CD4-positive, alpha-beta T cell (primary cell): ENCODE measurements at regions of chr2 and their contacts with region 1.

Region 1: DNA sequence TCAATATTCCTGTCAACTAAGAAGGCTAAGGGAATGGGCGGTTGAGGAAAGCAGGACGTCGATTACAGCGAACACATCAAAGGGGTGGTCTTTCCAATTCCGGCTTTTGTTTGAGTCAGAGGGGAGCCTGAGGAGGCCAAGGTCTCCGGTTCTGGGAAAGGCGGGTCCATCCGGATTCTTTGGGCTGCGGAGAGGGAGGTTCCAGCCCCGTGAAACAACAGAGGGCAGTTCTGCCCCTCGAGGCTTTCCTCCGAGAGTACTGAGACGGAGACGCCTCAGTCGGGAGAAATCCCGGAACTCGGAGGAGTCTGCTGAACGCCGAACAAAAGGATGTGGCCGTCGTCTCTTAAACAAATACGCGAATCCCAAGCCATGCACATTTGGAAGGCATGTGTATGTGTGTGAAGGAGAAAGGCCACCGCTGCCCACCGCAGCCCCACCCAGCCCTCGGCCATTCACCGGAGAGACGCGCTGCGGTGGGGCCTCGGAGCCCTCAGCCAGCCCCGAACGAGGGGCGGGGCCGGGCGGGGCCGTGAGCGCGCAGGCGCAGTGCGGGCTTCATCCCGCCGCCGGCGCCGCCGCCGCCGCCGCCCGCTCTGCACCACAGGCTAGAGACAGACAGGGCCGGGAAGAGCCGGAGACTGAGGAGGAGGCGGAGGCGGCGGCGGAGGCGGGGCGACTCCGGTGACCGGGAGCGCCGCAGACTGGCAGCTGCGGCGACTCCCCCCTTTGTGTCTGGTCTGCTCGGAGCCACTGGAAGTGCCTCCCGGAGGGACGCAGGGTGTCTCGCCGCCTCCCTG is at the start of gene BMPR2:
- DNase-seq: peak; percentile 65 to 92 (median 80)
- ATAC-seq: peak; percentile 72
- H3K4me3 ChIP-seq: peak within 1 kb of the TSS; percentile 79
- H3K4me3 Mint-ChIP-seq: peak within 1 kb of the TSS; percentile 100
- H3K27ac ChIP-seq: peak within 1 kb of the TSS; percentile 21 to 37
- H3K27ac Mint-ChIP-seq: peak within 1 kb of the TSS; percentile 87
- H3K4me1 ChIP-seq: peaks cover 20% of the 10 kb centered on the region
- H3K4me1 Mint-ChIP-seq: peaks cover 31% of the 10 kb centered on the region
- H3K27me3 ChIP-seq: no peaks in the 10 kb centered on the region
- H3K27me3 Mint-ChIP-seq: no peaks in the 10 kb centered on the region
- CTCF ChIP-seq: no peak
- total RNA-seq, gene BMPR2: 12.7 to 12.8 TPM

Region 2: GRCh38 chr2:201432038-201432620 is 943.7 kb before region 1 on chr2:
- CTCF ChIA-PET with region 1: no interaction called
- POLR2A ChIA-PET with region 1: no interaction called
- intact Hi-C with region 1: loop called in 1 of 2 experiments (anchors 10 kb)
- DNase-seq: peak in 3 of 14 experiments; percentile 55 to 75 (median 59)
- ATAC-seq: peak; percentile 95
- H3K4me3 ChIP-seq: no peak overlapping the region
- H3K4me3 Mint-ChIP-seq: peak overlapping the region; percentile 59
- H3K27ac ChIP-seq: peak overlapping the region; percentile 13 to 57
- H3K27ac Mint-ChIP-seq: peak overlapping the region; percentile 88
- H3K4me1 ChIP-seq: peaks cover 25% of the 10 kb centered on the region
- H3K4me1 Mint-ChIP-seq: peaks cover 71% of the 10 kb centered on the region
- H3K27me3 ChIP-seq: no peaks in the 10 kb centered on the region
- H3K27me3 Mint-ChIP-seq: no peaks in the 10 kb centered on the region
- CTCF ChIP-seq: no peak

Region 3: GRCh38 chr2:202033321-202034248 is 342.2 kb before region 1 on chr2 and contains the start of gene FZD7:
- CTCF ChIA-PET with region 1: no interaction called
- POLR2A ChIA-PET with region 1: no interaction called
- intact Hi-C with region 1: loop called in 1 of 2 experiments (anchors 10 kb)
- DNase-seq: peak; percentile 69 to 91 (median 82)
- ATAC-seq: peak; percentile 78
- H3K4me3 ChIP-seq: peak within 1 kb of the TSS; percentile 95
- H3K4me3 Mint-ChIP-seq: peak within 1 kb of the TSS; percentile 94
- H3K27ac ChIP-seq: no peak within 1 kb of the TSS
- H3K27ac Mint-ChIP-seq: peak within 1 kb of the TSS; percentile 45
- H3K4me1 ChIP-seq: peaks cover 31% of the 10 kb centered on the region
- H3K4me1 Mint-ChIP-seq: peaks cover 12% of the 10 kb centered on the region
- H3K27me3 ChIP-seq: peaks cover 17 to 30% of the 10 kb centered on the region in 2 experiments
- H3K27me3 Mint-ChIP-seq: peaks cover 9% of the 10 kb centered on the region
- CTCF ChIP-seq: no peak
- total RNA-seq, gene FZD7: 0.17 to 0.25 TPM

Region 4: DNA sequence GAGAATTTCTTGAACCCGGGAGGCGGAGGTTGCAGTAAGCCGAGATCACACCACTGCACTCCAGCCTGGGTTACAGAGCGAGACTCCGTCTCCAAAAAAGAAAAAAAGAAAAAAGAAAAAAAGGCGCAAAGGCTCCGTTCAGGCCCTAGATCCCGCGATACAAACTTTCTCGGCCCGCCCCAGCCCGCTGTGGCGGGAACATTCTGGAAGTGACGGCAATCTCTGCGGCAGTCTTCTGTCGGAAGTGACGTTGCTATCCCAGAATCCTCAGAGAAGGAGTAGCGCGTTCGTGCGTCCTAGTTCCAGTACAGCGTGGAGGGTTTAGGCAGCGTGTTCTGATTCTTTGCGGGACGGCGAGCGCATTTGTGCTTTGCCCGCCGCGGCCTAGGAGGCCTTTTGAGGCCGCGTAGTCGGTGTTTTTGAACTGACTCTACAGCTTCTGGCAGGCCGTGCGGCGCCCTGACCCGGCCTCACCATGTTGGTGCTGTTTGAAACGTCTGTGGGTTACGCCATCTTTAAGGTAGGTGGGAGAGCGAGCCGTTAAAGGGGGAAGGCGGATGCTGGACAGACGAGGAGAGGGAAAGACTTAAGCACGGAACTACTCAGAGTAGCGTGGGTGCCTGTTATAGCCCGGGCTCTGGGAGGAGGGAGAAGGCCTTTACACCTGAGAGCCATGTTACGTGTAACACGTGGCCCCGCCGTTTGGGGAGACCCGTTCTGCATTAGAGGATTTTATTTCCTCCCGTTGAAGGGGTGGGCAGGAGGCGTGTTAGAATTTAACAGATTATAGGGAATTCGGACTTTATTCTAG is 110.1 kb before region 1 on chr2 and contains the start of gene NOP58:
- CTCF ChIA-PET with region 1: no interaction called
- POLR2A ChIA-PET with region 1: interaction called, 5 read pairs
- intact Hi-C with region 1: loop called in 1 of 2 experiments (anchors 5 kb)
- DNase-seq: peak; percentile 75 to 97 (median 84)
- ATAC-seq: peak; percentile 80
- H3K4me3 ChIP-seq: peak within 1 kb of the TSS; percentile 97
- H3K4me3 Mint-ChIP-seq: peak within 1 kb of the TSS; percentile 80
- H3K27ac ChIP-seq: peak within 1 kb of the TSS; percentile 97 to 99
- H3K27ac Mint-ChIP-seq: no peak within 1 kb of the TSS
- H3K4me1 ChIP-seq: peaks cover 29% of the 10 kb centered on the region
- H3K4me1 Mint-ChIP-seq: peaks cover 21% of the 10 kb centered on the region
- H3K27me3 ChIP-seq: no peaks in the 10 kb centered on the region
- H3K27me3 Mint-ChIP-seq: no peaks in the 10 kb centered on the region
- CTCF ChIP-seq: no peak
- total RNA-seq, gene NOP58: 280 to 288 TPM

Region 5: DNA sequence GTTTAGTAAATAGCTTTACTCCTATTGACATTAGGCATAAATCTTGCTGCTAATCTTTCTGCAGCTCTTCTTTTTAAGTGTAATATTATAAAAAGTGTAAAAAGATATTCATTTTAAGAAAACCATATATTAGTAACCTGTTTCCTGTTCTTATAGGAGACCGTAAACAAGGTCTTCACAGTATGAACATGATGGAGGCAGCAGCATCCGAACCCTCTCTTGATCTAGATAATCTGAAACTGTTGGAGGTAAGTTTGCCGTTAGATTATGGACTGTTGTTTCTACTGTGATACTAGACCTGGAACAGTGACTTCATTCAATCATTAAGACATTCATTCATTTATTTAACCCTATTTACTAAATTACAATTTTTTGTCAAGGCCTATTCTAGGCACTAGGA is 138.9 kb after region 1 on chr2:
- CTCF ChIA-PET with region 1: no interaction called
- POLR2A ChIA-PET with region 1: no interaction called
- intact Hi-C with region 1: no loop called
- DNase-seq: no peak
- ATAC-seq: no peak
- H3K4me3 ChIP-seq: no peak overlapping the region
- H3K4me3 Mint-ChIP-seq: no peak overlapping the region
- H3K27ac ChIP-seq: no peak overlapping the region
- H3K27ac Mint-ChIP-seq: no peak overlapping the region
- H3K4me1 ChIP-seq: no peaks in the 10 kb centered on the region
- H3K4me1 Mint-ChIP-seq: no peaks in the 10 kb centered on the region
- H3K27me3 ChIP-seq: no peaks in the 10 kb centered on the region
- H3K27me3 Mint-ChIP-seq: no peaks in the 10 kb centered on the region
- CTCF ChIP-seq: no peak

Region 6: GRCh38 chr2:202765436-202765835 is 389.6 kb after region 1 on chr2:
- CTCF ChIA-PET with region 1: no interaction called
- POLR2A ChIA-PET with region 1: no interaction called
- intact Hi-C with region 1: no loop called
- DNase-seq: no peak
- ATAC-seq: no peak
- H3K4me3 ChIP-seq: no peak overlapping the region
- H3K4me3 Mint-ChIP-seq: no peak overlapping the region
- H3K27ac ChIP-seq: no peak overlapping the region
- H3K27ac Mint-ChIP-seq: peak overlapping the region; percentile 84
- H3K4me1 ChIP-seq: peaks cover 4% of the 10 kb centered on the region
- H3K4me1 Mint-ChIP-seq: peaks cover 63% of the 10 kb centered on the region
- H3K27me3 ChIP-seq: no peaks in the 10 kb centered on the region
- H3K27me3 Mint-ChIP-seq: no peaks in the 10 kb centered on the region
- CTCF ChIP-seq: no peak

Region 7: DNA sequence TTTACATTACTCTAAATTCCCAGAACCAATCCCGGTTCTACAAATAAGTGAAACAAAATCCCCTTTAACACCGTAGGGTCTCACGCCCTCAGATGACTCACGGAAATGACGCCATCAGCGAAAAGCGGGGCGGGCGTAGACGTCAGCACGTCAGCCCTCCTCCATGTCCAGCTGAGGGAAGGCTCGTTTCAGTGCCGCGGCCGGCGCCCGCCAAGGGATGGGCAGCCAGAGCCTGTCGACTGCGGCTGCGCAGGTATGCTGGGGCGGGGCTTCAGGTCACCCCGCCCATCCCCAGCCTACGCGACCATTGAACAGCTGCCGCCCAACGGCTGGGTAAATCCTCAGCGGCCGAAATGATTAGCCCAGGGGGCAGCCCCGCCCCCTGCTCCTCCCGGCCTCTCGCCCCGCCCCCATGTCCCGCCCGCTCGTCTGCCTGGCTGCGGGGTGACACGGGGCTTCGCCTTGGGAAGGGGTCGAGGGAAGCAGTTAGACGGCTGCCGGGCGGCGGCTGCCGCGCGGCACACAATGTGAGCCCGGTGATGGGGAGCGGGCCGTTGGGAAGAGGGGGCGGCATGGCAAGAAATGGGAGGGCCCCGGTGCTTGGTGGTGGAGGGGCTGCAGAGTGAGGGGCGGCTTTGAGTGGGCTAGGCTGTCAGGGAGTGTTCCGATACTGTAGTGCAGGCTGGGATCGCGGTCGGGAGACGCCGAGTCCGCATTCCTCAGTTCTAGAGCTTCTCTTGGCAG is 638.8 kb after region 1 on chr2 and contains the start of gene NBEAL1:
- CTCF ChIA-PET with region 1: no interaction called
- POLR2A ChIA-PET with region 1: no interaction called
- intact Hi-C with region 1: loop called in 1 of 2 experiments (anchors 10 kb)
- DNase-seq: peak; percentile 86 to 99 (median 94)
- ATAC-seq: peak; percentile 87
- H3K4me3 ChIP-seq: peak within 1 kb of the TSS; percentile 88
- H3K4me3 Mint-ChIP-seq: peak within 1 kb of the TSS; percentile 93
- H3K27ac ChIP-seq: peak within 1 kb of the TSS; percentile 64 to 86
- H3K27ac Mint-ChIP-seq: peak within 1 kb of the TSS; percentile 93
- H3K4me1 ChIP-seq: peaks cover 15% of the 10 kb centered on the region
- H3K4me1 Mint-ChIP-seq: peaks cover 50% of the 10 kb centered on the region
- H3K27me3 ChIP-seq: no peaks in the 10 kb centered on the region
- H3K27me3 Mint-ChIP-seq: no peaks in the 10 kb centered on the region
- CTCF ChIP-seq: no peak
- total RNA-seq, gene NBEAL1: 8.3 to 11.2 TPM